ENCODE measurements at regions of chr12 and their contacts with region 1.

Region 1: GRCh38 chr12:59499774-59500173 is 96.1 kb upstream of the SLC16A7 start:
- DNase-seq: no peak
- H3K4me3 ChIP-seq: no peak overlapping the region
- H3K27ac ChIP-seq: no peak overlapping the region
- H3K4me1 ChIP-seq: peaks cover 13% of the 10 kb centered on the region
- H3K27me3 ChIP-seq: no peaks in the 10 kb centered on the region
- CTCF ChIP-seq: no peak

Region 2: DNA sequence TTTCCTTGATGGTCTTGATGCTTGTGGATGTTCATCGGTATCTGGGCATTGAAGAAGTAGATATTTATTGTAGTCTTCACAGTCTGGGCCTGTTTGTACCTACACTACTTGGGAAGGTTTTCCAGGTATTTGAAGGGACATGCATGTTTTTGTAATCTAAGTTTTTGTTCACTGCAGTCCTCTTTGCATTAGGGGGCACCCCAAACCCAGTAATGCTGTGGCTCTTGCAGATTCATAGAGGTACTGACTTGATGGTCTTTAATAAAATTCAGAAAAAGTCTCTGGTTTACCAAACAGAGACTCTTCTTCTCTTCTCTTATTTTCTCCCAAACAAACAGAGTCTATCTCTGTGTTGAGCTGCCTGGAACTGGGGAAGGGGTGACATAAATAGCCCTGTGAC is 54.8 kb before region 1 on chr12:
- CTCF ChIA-PET with region 1: no interaction called
- dilution Hi-C with region 1: no loop called
- in situ Hi-C with region 1: no loop called
- intact Hi-C with region 1: no loop called
- DNase-seq: peak; percentile 8
- H3K4me3 ChIP-seq: no peak overlapping the region
- H3K27ac ChIP-seq: no peak overlapping the region
- H3K4me1 ChIP-seq: no peaks in the 10 kb centered on the region
- H3K27me3 ChIP-seq: no peaks in the 10 kb centered on the region
- CTCF ChIP-seq: peak; percentile 6 to 48

Region 3: DNA sequence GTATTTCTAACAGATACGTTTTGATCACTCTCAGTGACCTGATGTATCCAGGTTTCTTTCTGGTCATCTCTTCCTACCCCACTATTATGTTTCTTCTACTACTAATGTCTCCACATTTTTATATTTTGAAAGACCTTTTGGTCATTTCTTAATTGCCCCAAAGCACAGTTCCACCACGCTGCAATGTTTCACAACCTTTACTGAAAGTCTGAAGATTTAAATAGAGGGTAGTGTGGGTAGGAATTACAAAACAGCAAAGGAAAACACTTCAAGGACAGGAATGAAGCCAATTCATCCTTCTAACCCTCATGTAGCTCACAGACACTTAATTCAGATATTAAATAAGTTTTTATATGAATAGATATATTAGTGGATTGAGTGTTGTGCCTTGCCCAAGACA is 59.9 kb after region 1 on chr12:
- CTCF ChIA-PET with region 1: no interaction called
- dilution Hi-C with region 1: loop called (anchors 5 kb)
- in situ Hi-C with region 1: no loop called
- intact Hi-C with region 1: no loop called
- DNase-seq: no peak
- H3K4me3 ChIP-seq: no peak overlapping the region
- H3K27ac ChIP-seq: no peak overlapping the region
- H3K4me1 ChIP-seq: no peaks in the 10 kb centered on the region
- H3K27me3 ChIP-seq: no peaks in the 10 kb centered on the region
- CTCF ChIP-seq: no peak

Region 4: GRCh38 chr12:59699421-59700152 is 199.8 kb after region 1 on chr12:
- CTCF ChIA-PET with region 1: no interaction called
- dilution Hi-C with region 1: no loop called
- in situ Hi-C with region 1: no loop called
- intact Hi-C with region 1: no loop called
- DNase-seq: peak; percentile 65
- H3K4me3 ChIP-seq: peak overlapping the region in 1 of 3 experiments; percentile 1
- H3K27ac ChIP-seq: no peak overlapping the region
- H3K4me1 ChIP-seq: peaks cover 17% of the 10 kb centered on the region
- H3K27me3 ChIP-seq: no peaks in the 10 kb centered on the region
- CTCF ChIP-seq: no peak

Measured in mammary epithelial cell (primary cell).